Naive thymus-derived CD4-positive, alpha-beta T cell (primary cell): ENCODE measurements at regions of chr2 and their contacts with region 1.

Region 1: GRCh38 chr2:216633616-216634369 is 573 bp downstream of the IGFBP2 start:
- DNase-seq: peak in 1 of 9 donors; percentile 37
- ATAC-seq: peak; percentile 7
- H3K4me3 ChIP-seq: no peak overlapping the region
- H3K4me3 Mint-ChIP-seq: peak overlapping the region; percentile 66 to 91 (median 78)
- H3K27ac ChIP-seq: no peak overlapping the region
- H3K27ac Mint-ChIP-seq: peak overlapping the region in 1 of 9 donors; percentile 62
- H3K4me1 ChIP-seq: peaks cover 0 to 11% of the 10 kb centered on the region in 2 donors
- H3K4me1 Mint-ChIP-seq: peaks cover 15 to 41% (median 27%) of the 10 kb centered on the region in 7 donors
- H3K27me3 ChIP-seq: no peaks in the 10 kb centered on the region
- H3K27me3 Mint-ChIP-seq: peaks cover 62 to 71% (median 67%) of the 10 kb centered on the region in 5 donors

Region 2: GRCh38 chr2:216606551-216607276 is 27.1 kb before region 1 on chr2:
- CTCF ChIA-PET with region 1: no interaction called
- POLR2A ChIA-PET with region 1: no interaction called
- intact Hi-C with region 1: loop called in 1 of 2 experiments (anchors 2 kb)
- DNase-seq: peak; percentile 5 to 74 (median 28)
- ATAC-seq: peak; percentile 76
- H3K4me3 ChIP-seq: peak overlapping the region; percentile 45
- H3K4me3 Mint-ChIP-seq: peak overlapping the region; percentile 59 to 87 (median 80)
- H3K27ac ChIP-seq: no peak overlapping the region
- H3K27ac Mint-ChIP-seq: peak overlapping the region in 8 of 9 donors; percentile 12 to 94 (median 70)
- H3K4me1 ChIP-seq: peaks cover 2% of the 10 kb centered on the region in 2 donors
- H3K4me1 Mint-ChIP-seq: peaks cover 8 to 47% (median 13%) of the 10 kb centered on the region in 7 donors
- H3K27me3 ChIP-seq: no peaks in the 10 kb centered on the region
- H3K27me3 Mint-ChIP-seq: peaks cover 0 to 16% (median 10%) of the 10 kb centered on the region in 5 donors

Region 3: DNA sequence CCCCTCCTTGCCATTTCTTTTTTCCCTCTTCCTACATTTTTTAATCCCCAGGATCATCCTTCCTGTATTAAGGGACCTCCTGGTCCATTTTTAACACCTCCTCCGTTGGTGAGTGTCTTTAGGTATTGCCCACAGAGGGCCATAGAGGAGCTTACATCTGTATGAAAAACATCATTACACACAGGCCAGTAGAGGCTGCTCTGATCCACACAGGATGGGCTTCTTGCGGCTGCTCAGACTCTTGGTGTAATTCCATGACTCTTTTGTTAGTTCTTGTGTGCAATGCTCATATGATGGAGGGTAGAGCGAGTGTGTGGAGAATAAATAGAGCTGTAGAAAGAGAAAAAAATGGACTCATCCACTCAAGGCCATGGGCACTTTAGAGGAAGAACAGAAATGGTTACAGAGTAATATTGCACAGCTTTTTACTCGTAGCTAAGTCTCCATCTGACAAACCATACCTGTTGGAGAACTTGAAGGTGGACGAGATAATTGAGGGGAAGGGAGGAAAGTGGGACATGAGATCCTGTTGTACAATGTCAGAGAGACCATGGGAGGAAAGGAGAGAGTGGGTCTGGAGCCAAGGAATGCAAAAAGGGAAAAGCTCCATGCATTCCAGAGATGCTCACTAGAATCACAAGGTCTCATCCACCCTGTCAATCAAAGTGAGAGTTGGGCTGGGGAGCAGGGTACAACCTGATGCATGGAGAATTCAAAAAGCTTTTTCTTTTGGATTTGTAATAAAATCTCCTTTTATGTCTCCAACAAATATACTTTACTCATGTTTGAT is 355.7 kb after region 1 on chr2:
- CTCF ChIA-PET with region 1: no interaction called
- POLR2A ChIA-PET with region 1: no interaction called
- intact Hi-C with region 1: no loop called
- DNase-seq: no peak
- ATAC-seq: no peak
- H3K4me3 ChIP-seq: no peak overlapping the region
- H3K4me3 Mint-ChIP-seq: no peak overlapping the region
- H3K27ac ChIP-seq: no peak overlapping the region
- H3K27ac Mint-ChIP-seq: no peak overlapping the region
- H3K4me1 ChIP-seq: no peaks in the 10 kb centered on the region
- H3K4me1 Mint-ChIP-seq: no peaks in the 10 kb centered on the region
- H3K27me3 ChIP-seq: no peaks in the 10 kb centered on the region
- H3K27me3 Mint-ChIP-seq: peaks cover 0 to 22% (median 14%) of the 10 kb centered on the region in 5 donors

Region 4: DNA sequence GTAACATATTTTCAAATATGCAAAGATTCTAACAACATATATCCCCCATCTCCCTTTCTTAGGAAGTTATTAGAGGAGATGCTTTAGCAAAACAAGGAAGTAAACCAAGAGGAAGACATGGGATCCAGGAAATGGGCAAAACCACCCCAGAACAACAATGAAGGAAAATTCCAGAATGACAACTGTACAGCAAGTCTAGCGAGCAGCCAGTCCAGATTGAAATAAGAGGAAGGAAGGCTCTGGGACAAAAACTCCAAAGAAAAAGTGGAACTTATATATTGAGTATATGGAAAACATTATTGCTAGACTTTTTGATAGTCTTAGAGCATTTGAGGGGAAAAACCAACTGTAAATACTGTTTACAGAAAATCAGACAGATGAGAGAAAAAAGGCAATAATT is 1580.3 kb after region 1 on chr2:
- CTCF ChIA-PET with region 1: no interaction called
- POLR2A ChIA-PET with region 1: no interaction called
- intact Hi-C with region 1: no loop called
- DNase-seq: no peak
- ATAC-seq: no peak
- H3K4me3 ChIP-seq: no peak overlapping the region
- H3K4me3 Mint-ChIP-seq: no peak overlapping the region
- H3K27ac ChIP-seq: no peak overlapping the region
- H3K27ac Mint-ChIP-seq: peak overlapping the region in 2 of 9 donors; percentile 7 to 96
- H3K4me1 ChIP-seq: peaks cover 0 to 7% of the 10 kb centered on the region in 2 donors
- H3K4me1 Mint-ChIP-seq: peaks cover 7 to 23% (median 17%) of the 10 kb centered on the region in 7 donors
- H3K27me3 ChIP-seq: no peaks in the 10 kb centered on the region
- H3K27me3 Mint-ChIP-seq: peaks cover 0 to 25% (median 0%) of the 10 kb centered on the region in 5 donors